Heart right ventricle (tissue), 16 donors: ENCODE measurements at regions of chr7 and their contacts with region 1.

Region 1: DNA sequence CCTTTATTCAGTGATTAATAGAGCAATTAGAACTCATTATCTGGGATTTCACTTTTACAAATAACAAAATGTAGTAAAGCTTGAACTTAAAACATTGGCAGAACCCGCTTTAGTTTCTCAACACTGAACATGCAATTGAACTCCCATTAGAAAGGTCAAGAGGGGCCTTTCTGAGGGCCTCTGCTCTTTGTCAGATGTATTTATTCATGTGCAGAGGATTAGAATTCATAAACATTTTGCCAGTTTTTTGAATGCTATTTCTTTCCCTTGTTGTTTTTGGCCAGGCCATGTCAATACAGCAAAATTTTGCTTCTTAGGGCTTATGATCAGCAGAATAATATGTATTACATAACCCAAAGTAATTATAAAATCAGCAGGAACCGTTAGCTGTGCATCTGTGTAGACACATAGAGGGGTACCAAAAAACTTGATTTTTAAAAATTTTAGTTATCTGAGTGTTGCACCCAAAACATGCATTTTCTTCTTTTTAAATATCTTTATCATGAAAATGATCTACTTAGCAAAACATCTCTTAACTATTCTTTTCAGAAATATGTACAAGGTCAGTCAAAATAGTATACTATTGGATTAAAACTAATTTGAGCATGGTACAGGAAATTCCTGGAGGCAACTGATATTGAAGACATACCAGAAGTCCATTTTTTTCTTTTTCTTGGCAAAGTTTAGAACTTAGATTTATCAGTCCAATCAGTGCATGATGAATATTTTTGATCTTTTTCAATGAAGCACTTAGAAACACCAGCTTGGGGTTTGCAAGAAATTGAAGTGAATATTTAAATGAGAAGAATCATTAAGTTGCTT is 177.5 kb downstream of the TWIST1 start:
- DNase-seq: no peak
- ATAC-seq: no peak
- H3K4me3 ChIP-seq: no peak overlapping the region
- H3K27ac ChIP-seq: no peak overlapping the region
- H3K4me1 ChIP-seq: peaks cover 0 to 12% (median 4%) of the 10 kb centered on the region in 9 donors
- H3K27me3 ChIP-seq: no peaks in the 10 kb centered on the region
- CTCF ChIP-seq: no peak

Region 2: GRCh38 chr7:19009241-19009935 is 69.4 kb after region 1 on chr7:
- intact Hi-C with region 1: loop called in 1 of 10 experiments (anchors 10 kb)
- DNase-seq: no peak
- ATAC-seq: no peak
- H3K4me3 ChIP-seq: no peak overlapping the region
- H3K27ac ChIP-seq: peak overlapping the region in 1 of 10 donors; percentile 28
- H3K4me1 ChIP-seq: no peaks in the 10 kb centered on the region
- H3K27me3 ChIP-seq: no peaks in the 10 kb centered on the region
- CTCF ChIP-seq: no peak

Region 3: DNA sequence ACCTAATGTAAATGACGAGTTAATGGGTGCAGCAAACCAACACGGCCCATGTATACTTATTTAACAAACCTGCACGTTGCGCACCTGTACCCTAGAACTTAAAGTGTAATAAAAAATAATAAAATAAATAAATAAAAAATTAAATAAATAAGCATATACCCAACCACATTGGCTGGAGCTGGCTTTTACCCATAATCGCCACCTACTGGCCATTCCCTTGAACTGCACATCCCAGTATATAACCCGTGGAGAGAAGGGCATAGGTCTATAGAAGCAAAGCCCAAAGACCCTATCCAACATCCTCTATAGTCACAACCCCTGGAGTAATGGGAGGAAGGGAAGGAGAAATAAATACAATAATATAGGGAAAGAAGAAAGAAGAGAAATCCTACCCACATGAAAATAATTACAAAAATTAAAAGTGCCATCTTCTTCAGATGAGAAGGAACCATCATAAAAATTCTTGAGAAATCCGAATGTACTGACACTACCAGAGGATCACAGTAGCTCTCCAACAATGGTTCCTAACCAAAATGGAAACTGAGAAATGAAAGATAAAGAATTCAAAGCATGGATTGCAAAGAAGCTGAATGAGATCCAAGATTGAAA is 111.9 kb after region 1 on chr7:
- intact Hi-C with region 1: loop called in 1 of 10 experiments (anchors 10 kb)
- DNase-seq: no peak
- ATAC-seq: no peak
- H3K4me3 ChIP-seq: no peak overlapping the region
- H3K27ac ChIP-seq: no peak overlapping the region
- H3K4me1 ChIP-seq: no peaks in the 10 kb centered on the region
- H3K27me3 ChIP-seq: no peaks in the 10 kb centered on the region
- CTCF ChIP-seq: peak; percentile 43 to 80 (median 73)